Naive thymus-derived CD4-positive, alpha-beta T cell (primary cell): ENCODE measurements at regions of chr5 and their contacts with region 1.

Region 1: GRCh38 chr5:88268385-88269184 is at the start of gene TMEM161B:
- DNase-seq: peak; percentile 81 to 97 (median 95)
- ATAC-seq: peak; percentile 98
- H3K4me3 ChIP-seq: peak within 1 kb of the TSS; percentile 99
- H3K4me3 Mint-ChIP-seq: peak within 1 kb of the TSS; percentile 99 to 100 (median 99)
- H3K27ac ChIP-seq: peak within 1 kb of the TSS; percentile 97
- H3K27ac Mint-ChIP-seq: peak within 1 kb of the TSS; percentile 94 to 100 (median 97)
- H3K4me1 ChIP-seq: peaks cover 11 to 21% of the 10 kb centered on the region in 2 donors
- H3K4me1 Mint-ChIP-seq: peaks cover 24 to 81% (median 71%) of the 10 kb centered on the region in 7 donors
- H3K27me3 ChIP-seq: no peaks in the 10 kb centered on the region
- H3K27me3 Mint-ChIP-seq: no peaks in the 10 kb centered on the region
- total RNA-seq, gene TMEM161B: 21.1 to 39.7 (median 28.4) TPM

Region 2: GRCh38 chr5:86617756-86618576 is 1650.6 kb before region 1 on chr5 and contains the start of gene COX7C:
- CTCF ChIA-PET with region 1: no interaction called
- POLR2A ChIA-PET with region 1: no interaction called
- intact Hi-C with region 1: loop called (anchors 1 to 2 kb)
- DNase-seq: peak; percentile 67 to 97 (median 96)
- ATAC-seq: peak; percentile 97
- H3K4me3 ChIP-seq: peak within 1 kb of the TSS; percentile 95
- H3K4me3 Mint-ChIP-seq: peak within 1 kb of the TSS; percentile 96 to 100 (median 100)
- H3K27ac ChIP-seq: peak within 1 kb of the TSS; percentile 96
- H3K27ac Mint-ChIP-seq: peak within 1 kb of the TSS; percentile 98 to 100 (median 100)
- H3K4me1 ChIP-seq: peaks cover 7 to 12% of the 10 kb centered on the region in 2 donors
- H3K4me1 Mint-ChIP-seq: peaks cover 5 to 46% (median 32%) of the 10 kb centered on the region in 7 donors
- H3K27me3 ChIP-seq: no peaks in the 10 kb centered on the region
- H3K27me3 Mint-ChIP-seq: peaks cover 8 to 14% (median 9%) of the 10 kb centered on the region in 5 donors
- total RNA-seq, gene COX7C: 393 to 571 (median 547) TPM

Region 3: GRCh38 chr5:88355490-88356050 is 87.0 kb after region 1 on chr5:
- CTCF ChIA-PET with region 1: no interaction called
- POLR2A ChIA-PET with region 1: no interaction called
- intact Hi-C with region 1: no loop called
- DNase-seq: no peak
- ATAC-seq: no peak
- H3K4me3 ChIP-seq: no peak overlapping the region
- H3K4me3 Mint-ChIP-seq: no peak overlapping the region
- H3K27ac ChIP-seq: no peak overlapping the region
- H3K27ac Mint-ChIP-seq: no peak overlapping the region
- H3K4me1 ChIP-seq: no peaks in the 10 kb centered on the region
- H3K4me1 Mint-ChIP-seq: no peaks in the 10 kb centered on the region
- H3K27me3 ChIP-seq: no peaks in the 10 kb centered on the region
- H3K27me3 Mint-ChIP-seq: peaks cover 0 to 11% (median 5%) of the 10 kb centered on the region in 5 donors

Region 4: DNA sequence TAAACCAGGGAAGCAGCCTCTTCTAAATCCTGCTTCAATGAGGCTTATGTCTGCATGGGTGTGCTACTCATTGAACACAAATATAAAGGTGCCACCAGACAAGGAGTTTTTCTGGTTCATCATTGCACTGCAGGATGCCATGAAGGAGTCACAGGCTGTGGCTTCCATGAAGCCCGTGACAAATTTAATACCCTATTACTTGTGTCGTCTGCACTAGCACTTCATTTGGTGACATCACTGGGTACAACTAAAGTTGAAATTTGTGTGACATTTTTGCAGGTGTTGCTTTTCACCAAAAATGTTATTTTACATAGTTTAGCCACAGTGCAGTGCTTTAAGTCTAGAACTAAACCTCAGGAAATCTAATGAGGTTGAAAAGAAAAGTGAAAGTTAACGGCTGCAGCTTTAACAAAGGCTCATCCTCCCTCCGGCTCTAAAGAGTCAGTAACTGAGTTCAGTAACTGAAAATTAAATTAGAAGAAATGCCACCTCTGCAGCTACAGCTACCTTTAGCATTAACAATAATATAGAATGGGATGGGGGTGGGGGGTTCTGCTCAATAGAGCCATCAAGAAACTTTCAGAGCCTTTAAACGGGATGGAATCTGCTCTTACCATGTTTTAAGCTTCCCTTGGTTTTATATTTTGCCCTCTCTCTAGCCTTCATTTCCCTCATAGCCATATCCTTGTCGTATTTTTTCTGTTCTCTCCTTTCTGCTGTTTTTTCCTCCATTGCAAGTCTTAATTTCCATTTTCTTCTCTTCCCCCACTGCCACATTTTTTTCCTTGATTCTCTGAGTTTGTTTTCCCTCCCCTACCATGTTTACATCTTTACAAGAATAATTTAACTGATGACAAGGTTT is 233.8 kb after region 1 on chr5:
- CTCF ChIA-PET with region 1: no interaction called
- POLR2A ChIA-PET with region 1: no interaction called
- intact Hi-C with region 1: loop called (anchors 1 kb)
- DNase-seq: peak in 5 of 9 donors; percentile 30 to 41 (median 33)
- ATAC-seq: peak; percentile 81
- H3K4me3 ChIP-seq: peak overlapping the region; percentile 74
- H3K4me3 Mint-ChIP-seq: peak overlapping the region; percentile 89 to 100 (median 95)
- H3K27ac ChIP-seq: peak overlapping the region; percentile 70
- H3K27ac Mint-ChIP-seq: peak overlapping the region; percentile 84 to 98 (median 95)
- H3K4me1 ChIP-seq: no peaks in the 10 kb centered on the region
- H3K4me1 Mint-ChIP-seq: peaks cover 7 to 23% (median 17%) of the 10 kb centered on the region in 7 donors
- H3K27me3 ChIP-seq: no peaks in the 10 kb centered on the region
- H3K27me3 Mint-ChIP-seq: peaks cover 0 to 14% (median 6%) of the 10 kb centered on the region in 5 donors

Region 5: GRCh38 chr5:88660947-88661805 is 392.6 kb after region 1 on chr5:
- CTCF ChIA-PET with region 1: no interaction called
- POLR2A ChIA-PET with region 1: interaction called, 3 read pairs
- intact Hi-C with region 1: loop called (anchors 5 to 10 kb)
- DNase-seq: peak in 1 of 9 donors; percentile 57
- ATAC-seq: peak; percentile 38
- H3K4me3 ChIP-seq: peak overlapping the region; percentile 15
- H3K4me3 Mint-ChIP-seq: peak overlapping the region in 9 of 10 donors; percentile 43 to 82 (median 62)
- H3K27ac ChIP-seq: no peak overlapping the region
- H3K27ac Mint-ChIP-seq: peak overlapping the region in 2 of 9 donors; percentile 28 to 44
- H3K4me1 ChIP-seq: peaks cover 3 to 6% of the 10 kb centered on the region in 2 donors
- H3K4me1 Mint-ChIP-seq: peaks cover 6 to 23% (median 19%) of the 10 kb centered on the region in 7 donors
- H3K27me3 ChIP-seq: peaks cover 19 to 25% of the 10 kb centered on the region in 2 donors
- H3K27me3 Mint-ChIP-seq: peaks cover 69 to 82% (median 78%) of the 10 kb centered on the region in 5 donors

Region 6: GRCh38 chr5:88666761-88667495 is 398.3 kb after region 1 on chr5:
- CTCF ChIA-PET with region 1: no interaction called
- POLR2A ChIA-PET with region 1: no interaction called
- intact Hi-C with region 1: loop called (anchors 5 to 10 kb)
- DNase-seq: no peak
- ATAC-seq: no peak
- H3K4me3 ChIP-seq: peak overlapping the region; percentile 45
- H3K4me3 Mint-ChIP-seq: peak overlapping the region; percentile 75 to 88 (median 86)
- H3K27ac ChIP-seq: no peak overlapping the region
- H3K27ac Mint-ChIP-seq: peak overlapping the region in 3 of 9 donors; percentile 0 to 6 (median 3)
- H3K4me1 ChIP-seq: peaks cover 7 to 8% of the 10 kb centered on the region in 2 donors
- H3K4me1 Mint-ChIP-seq: peaks cover 11 to 34% (median 25%) of the 10 kb centered on the region in 7 donors
- H3K27me3 ChIP-seq: peaks cover 12 to 29% of the 10 kb centered on the region in 2 donors
- H3K27me3 Mint-ChIP-seq: peaks cover 92 to 98% (median 93%) of the 10 kb centered on the region in 5 donors

Region 7: DNA sequence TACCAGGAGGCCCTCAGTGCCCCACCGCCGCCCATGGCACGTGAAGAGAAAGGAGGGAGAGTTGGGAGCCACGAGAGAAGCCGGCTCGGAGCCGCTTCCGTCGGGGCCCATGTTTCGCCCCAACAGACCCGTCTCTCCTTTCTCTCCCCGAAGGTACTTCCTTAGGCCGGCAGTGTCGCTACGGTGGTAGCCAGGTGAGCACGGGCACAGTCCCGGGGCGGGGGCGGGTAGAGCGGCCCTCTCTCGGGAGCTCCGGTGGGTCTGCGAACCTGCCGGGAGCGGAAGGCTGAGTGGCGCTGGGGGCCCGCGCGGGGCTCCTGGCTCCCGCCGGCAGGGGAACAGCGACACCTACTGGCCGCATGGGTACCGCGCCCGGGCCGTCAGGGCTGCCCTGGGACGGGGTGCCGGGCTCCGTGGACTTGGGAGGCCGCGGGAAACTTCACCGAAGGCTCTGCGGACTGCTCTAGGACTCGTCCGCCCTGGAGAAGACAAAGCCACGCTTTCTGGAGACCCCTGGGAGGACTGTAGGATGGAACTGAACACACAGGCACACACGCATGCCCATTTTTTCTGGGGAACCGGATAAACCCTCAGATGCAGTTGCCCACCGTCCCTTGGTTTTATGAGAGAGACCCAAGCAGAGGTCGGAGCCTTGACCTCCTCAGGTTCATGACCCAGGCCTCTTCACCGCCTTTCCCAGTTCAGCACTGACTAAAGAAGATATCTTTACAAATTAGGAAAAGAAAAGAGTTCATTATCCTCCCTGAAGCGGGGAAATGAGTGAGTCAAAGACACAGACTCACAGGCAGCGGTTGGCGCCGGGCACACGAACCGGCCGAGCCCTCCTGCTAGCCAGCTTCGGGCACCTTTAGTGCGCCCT is 411.9 kb after region 1 on chr5:
- CTCF ChIA-PET with region 1: no interaction called
- POLR2A ChIA-PET with region 1: no interaction called
- intact Hi-C with region 1: loop called in 1 of 2 experiments (anchors 5 kb)
- DNase-seq: peak; percentile 53 to 87 (median 77)
- ATAC-seq: peak; percentile 93
- H3K4me3 ChIP-seq: peak overlapping the region; percentile 36
- H3K4me3 Mint-ChIP-seq: peak overlapping the region; percentile 30 to 65 (median 58)
- H3K27ac ChIP-seq: no peak overlapping the region
- H3K27ac Mint-ChIP-seq: peak overlapping the region in 2 of 9 donors; percentile 25 to 30
- H3K4me1 ChIP-seq: peaks cover 0 to 6% of the 10 kb centered on the region in 2 donors
- H3K4me1 Mint-ChIP-seq: peaks cover 15 to 37% (median 25%) of the 10 kb centered on the region in 7 donors
- H3K27me3 ChIP-seq: peaks cover 32 to 60% of the 10 kb centered on the region in 2 donors
- H3K27me3 Mint-ChIP-seq: peaks cover 78 to 92% (median 80%) of the 10 kb centered on the region in 5 donors